ENCODE measurements at regions of chrX and their contacts with region 1.

Region 1: GRCh38 chrX:10119399-10119990 is 37.3 kb upstream of the CLCN4 start:
- DNase-seq: peak; percentile 60 to 86
- ATAC-seq: peak; percentile 88 to 97 (median 90)
- H3K4me3 ChIP-seq: no peak overlapping the region
- H3K4me3 Mint-ChIP-seq: peak overlapping the region; percentile 38
- H3K27ac ChIP-seq: peak overlapping the region; percentile 8
- H3K27ac Mint-ChIP-seq: peak overlapping the region; percentile 17 to 37
- H3K4me1 ChIP-seq: peaks cover 24% of the 10 kb centered on the region
- H3K4me1 Mint-ChIP-seq: peaks cover 23 to 31% of the 10 kb centered on the region in 2 donors
- H3K27me3 ChIP-seq: no peaks in the 10 kb centered on the region
- H3K27me3 Mint-ChIP-seq: no peaks in the 10 kb centered on the region
- CTCF ChIP-seq: peak; percentile 100

Region 2: DNA sequence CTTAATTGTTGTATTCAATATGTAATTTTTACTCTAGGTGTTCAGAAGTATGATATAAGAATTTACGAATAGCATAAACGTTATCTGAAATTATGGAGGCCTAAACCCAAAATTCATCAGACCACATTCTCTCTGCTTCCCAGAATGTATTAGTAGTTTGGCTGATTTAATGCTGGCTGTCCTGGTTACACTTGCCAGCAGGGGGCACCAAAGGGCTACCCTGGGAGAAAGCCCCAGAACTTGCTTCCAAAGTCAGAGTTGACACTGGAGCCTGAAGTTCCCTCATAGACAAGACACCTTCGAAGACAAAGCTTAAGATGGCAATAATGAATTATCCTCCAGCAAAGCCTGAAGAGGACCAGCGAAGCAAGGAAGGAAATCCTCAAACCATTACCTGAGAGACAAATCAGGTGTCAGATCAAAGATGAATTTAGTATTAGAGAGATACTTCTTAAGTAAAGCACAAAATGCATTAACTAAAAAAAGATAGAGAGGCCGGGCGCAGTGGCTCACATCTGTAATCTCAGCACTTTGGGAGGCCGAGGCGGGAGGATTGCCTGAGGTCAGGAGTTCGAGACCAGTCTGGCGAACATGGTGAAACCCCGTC is 1376.3 kb before region 1 on chrX:
- intact Hi-C with region 1: loop called (anchors 2 kb)
- DNase-seq: peak; percentile 46 to 71
- ATAC-seq: peak in 2 of 3 donors; percentile 42 to 67
- H3K4me3 ChIP-seq: no peak overlapping the region
- H3K4me3 Mint-ChIP-seq: no peak overlapping the region
- H3K27ac ChIP-seq: no peak overlapping the region
- H3K27ac Mint-ChIP-seq: no peak overlapping the region
- H3K4me1 ChIP-seq: no peaks in the 10 kb centered on the region
- H3K4me1 Mint-ChIP-seq: no peaks in the 10 kb centered on the region
- H3K27me3 ChIP-seq: no peaks in the 10 kb centered on the region
- H3K27me3 Mint-ChIP-seq: peaks cover 3 to 6% of the 10 kb centered on the region in 2 donors
- CTCF ChIP-seq: peak; percentile 65

Region 3: GRCh38 chrX:8815464-8816065 is 1303.9 kb before region 1 on chrX:
- intact Hi-C with region 1: loop called (anchors 10 kb)
- DNase-seq: peak in 1 of 2 donors; percentile 62
- ATAC-seq: peak in 1 of 3 donors; percentile 70
- H3K4me3 ChIP-seq: no peak overlapping the region
- H3K4me3 Mint-ChIP-seq: no peak overlapping the region
- H3K27ac ChIP-seq: no peak overlapping the region
- H3K27ac Mint-ChIP-seq: no peak overlapping the region
- H3K4me1 ChIP-seq: no peaks in the 10 kb centered on the region
- H3K4me1 Mint-ChIP-seq: no peaks in the 10 kb centered on the region
- H3K27me3 ChIP-seq: no peaks in the 10 kb centered on the region
- H3K27me3 Mint-ChIP-seq: peaks cover 0 to 3% of the 10 kb centered on the region in 2 donors
- CTCF ChIP-seq: peak; percentile 70

Region 4: GRCh38 chrX:9873952-9874351 is 245.5 kb before region 1 on chrX:
- intact Hi-C with region 1: loop called (anchors 1 kb)
- DNase-seq: peak in 1 of 2 donors; percentile 60
- ATAC-seq: peak; percentile 64 to 77 (median 76)
- H3K4me3 ChIP-seq: no peak overlapping the region
- H3K4me3 Mint-ChIP-seq: no peak overlapping the region
- H3K27ac ChIP-seq: no peak overlapping the region
- H3K27ac Mint-ChIP-seq: no peak overlapping the region
- H3K4me1 ChIP-seq: no peaks in the 10 kb centered on the region
- H3K4me1 Mint-ChIP-seq: no peaks in the 10 kb centered on the region
- H3K27me3 ChIP-seq: no peaks in the 10 kb centered on the region
- H3K27me3 Mint-ChIP-seq: peaks cover 11% of the 10 kb centered on the region in 2 donors
- CTCF ChIP-seq: peak; percentile 22

Region 5: GRCh38 chrX:9885150-9885549 is 234.3 kb before region 1 on chrX:
- intact Hi-C with region 1: loop called (anchors 5 kb)
- DNase-seq: peak; percentile 21 to 63
- ATAC-seq: peak; percentile 62 to 86 (median 64)
- H3K4me3 ChIP-seq: no peak overlapping the region
- H3K4me3 Mint-ChIP-seq: no peak overlapping the region
- H3K27ac ChIP-seq: no peak overlapping the region
- H3K27ac Mint-ChIP-seq: no peak overlapping the region
- H3K4me1 ChIP-seq: no peaks in the 10 kb centered on the region
- H3K4me1 Mint-ChIP-seq: peaks cover 0 to 4% of the 10 kb centered on the region in 2 donors
- H3K27me3 ChIP-seq: no peaks in the 10 kb centered on the region
- H3K27me3 Mint-ChIP-seq: peaks cover 9 to 22% of the 10 kb centered on the region in 2 donors
- CTCF ChIP-seq: peak; percentile 25

Region 6: DNA sequence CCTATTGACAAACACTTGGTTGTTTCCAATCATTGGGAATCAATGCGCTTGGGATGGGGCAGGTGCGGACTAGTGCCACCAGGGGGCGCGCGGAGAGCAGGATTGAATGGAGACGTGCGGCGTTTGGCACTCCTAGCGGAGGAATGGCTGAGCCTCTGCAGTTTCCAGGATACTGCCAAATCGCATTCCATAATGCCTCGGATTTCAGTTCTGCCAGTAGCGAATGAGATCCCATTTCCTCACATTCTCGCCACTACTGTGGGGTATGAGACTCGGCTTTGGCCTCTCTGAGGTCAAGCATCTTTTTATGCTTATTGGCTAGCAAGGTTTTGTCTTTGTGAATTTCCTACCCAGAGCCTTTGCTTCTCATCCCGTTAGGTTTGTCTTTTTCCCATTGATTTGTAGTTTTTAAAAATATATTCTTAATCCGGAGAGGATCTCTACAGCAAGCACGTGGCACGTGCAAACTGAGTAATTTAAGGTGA is 123.6 kb before region 1 on chrX:
- intact Hi-C with region 1: loop called (anchors 1 kb)
- DNase-seq: peak; percentile 69 to 84
- ATAC-seq: peak; percentile 79 to 98 (median 95)
- H3K4me3 ChIP-seq: no peak overlapping the region
- H3K4me3 Mint-ChIP-seq: no peak overlapping the region
- H3K27ac ChIP-seq: no peak overlapping the region
- H3K27ac Mint-ChIP-seq: no peak overlapping the region
- H3K4me1 ChIP-seq: no peaks in the 10 kb centered on the region
- H3K4me1 Mint-ChIP-seq: no peaks in the 10 kb centered on the region
- H3K27me3 ChIP-seq: no peaks in the 10 kb centered on the region
- H3K27me3 Mint-ChIP-seq: peaks cover 0 to 2% of the 10 kb centered on the region in 2 donors
- CTCF ChIP-seq: peak; percentile 85